Activated T-helper 1 cell treated with anti-CD3 and anti-CD28 coated beads, Interleukin-12 subunit alpha, Interleukin-12 subunit beta, Interleukin-2, Interleukin-4 antibody, amounts not matched to agents 30 ng/mL and 10 ng/mL and 1 ng/mL, durations not matched to agents 14 hours and 24 hours and 36 hours (primary cell): ENCODE measurements at regions of chr9 and their contacts with region 1.

Region 1: DNA sequence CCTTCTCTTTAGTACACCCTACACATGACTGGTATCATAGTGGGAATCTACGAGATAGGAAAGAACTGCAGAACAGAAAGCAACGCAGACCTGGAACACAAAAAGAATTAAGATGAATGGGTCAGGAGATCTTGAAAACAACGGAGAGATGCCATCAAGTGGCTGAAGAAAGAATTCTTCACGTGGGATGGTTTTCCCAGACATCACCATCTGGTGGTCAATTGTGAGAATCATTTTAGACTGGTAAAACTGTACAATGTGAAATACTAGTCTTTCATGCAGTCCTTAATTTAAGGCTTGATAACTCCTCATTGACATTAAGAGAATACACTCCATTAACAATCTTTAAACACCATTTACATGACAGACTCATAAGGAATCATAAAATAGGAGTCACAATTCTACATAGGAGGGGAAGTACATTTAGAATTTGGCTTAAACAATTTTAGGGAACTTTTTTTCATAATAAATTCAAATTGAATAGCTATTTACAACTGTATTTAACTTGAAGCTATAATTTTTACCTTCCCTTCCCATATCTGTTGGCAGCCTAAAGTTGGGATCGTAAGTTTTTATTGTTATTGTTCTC is 128.4 kb upstream of the TRPM3 start:
- DNase-seq: no peak
- H3K4me3 Mint-ChIP-seq: no peak overlapping the region
- H3K27ac Mint-ChIP-seq: no peak overlapping the region
- H3K4me1 Mint-ChIP-seq: no peaks in the 10 kb centered on the region
- H3K27me3 Mint-ChIP-seq: peaks cover 2% of the 10 kb centered on the region

Region 2: GRCh38 chr9:70639853-70640814 is 609.7 kb before region 1 on chr9:
- intact Hi-C with region 1: loop called (anchors 2 kb)
- DNase-seq: no peak
- H3K4me3 Mint-ChIP-seq: no peak overlapping the region
- H3K27ac Mint-ChIP-seq: no peak overlapping the region
- H3K4me1 Mint-ChIP-seq: no peaks in the 10 kb centered on the region
- H3K27me3 Mint-ChIP-seq: peaks cover 9% of the 10 kb centered on the region

Region 3: GRCh38 chr9:71136696-71137095 is 113.1 kb before region 1 on chr9:
- intact Hi-C with region 1: no loop called
- DNase-seq: no peak
- H3K4me3 Mint-ChIP-seq: no peak overlapping the region
- H3K27ac Mint-ChIP-seq: no peak overlapping the region
- H3K4me1 Mint-ChIP-seq: no peaks in the 10 kb centered on the region
- H3K27me3 Mint-ChIP-seq: no peaks in the 10 kb centered on the region